Natural killer cell (primary cell): ENCODE measurements at regions of chr22 and their contacts with region 1.

Region 1: GRCh38 chr22:30634471-30635233 is 929 bp upstream of the SLC35E4 start:
- DNase-seq: peak; percentile 85 to 94
- ATAC-seq: peak; percentile 64 to 79 (median 66)
- H3K4me3 ChIP-seq: peak overlapping the region; percentile 49
- H3K4me3 Mint-ChIP-seq: peak overlapping the region; percentile 84
- H3K27ac ChIP-seq: peak overlapping the region; percentile 85
- H3K27ac Mint-ChIP-seq: peak overlapping the region; percentile 92 to 95
- H3K4me1 ChIP-seq: peaks cover 33% of the 10 kb centered on the region
- H3K4me1 Mint-ChIP-seq: peaks cover 7 to 25% of the 10 kb centered on the region in 2 donors
- H3K27me3 ChIP-seq: no peaks in the 10 kb centered on the region
- H3K27me3 Mint-ChIP-seq: no peaks in the 10 kb centered on the region
- CTCF ChIP-seq: peak; percentile 82

Region 2: GRCh38 chr22:30591588-30592359 is 42.9 kb before region 1 on chr22 and contains the start of gene PES1:
- intact Hi-C with region 1: loop called (anchors 1 kb)
- DNase-seq: peak; percentile 92 to 100
- ATAC-seq: peak; percentile 96 to 99 (median 98)
- H3K4me3 ChIP-seq: peak within 1 kb of the TSS; percentile 59
- H3K4me3 Mint-ChIP-seq: no peak within 1 kb of the TSS
- H3K27ac ChIP-seq: peak within 1 kb of the TSS; percentile 79
- H3K27ac Mint-ChIP-seq: no peak within 1 kb of the TSS
- H3K4me1 ChIP-seq: peaks cover 11% of the 10 kb centered on the region
- H3K4me1 Mint-ChIP-seq: no peaks in the 10 kb centered on the region
- H3K27me3 ChIP-seq: no peaks in the 10 kb centered on the region
- H3K27me3 Mint-ChIP-seq: no peaks in the 10 kb centered on the region
- CTCF ChIP-seq: no peak
- total RNA-seq, gene PES1: 30.9 to 39.7 (median 34.9) TPM

Region 3: GRCh38 chr22:30667494-30668385 is 33.1 kb after region 1 on chr22 and contains the start of gene DUSP18:
- intact Hi-C with region 1: loop called (anchors 1 kb)
- DNase-seq: peak; percentile 93 to 96
- ATAC-seq: peak; percentile 94 to 97 (median 95)
- H3K4me3 ChIP-seq: peak within 1 kb of the TSS; percentile 61
- H3K4me3 Mint-ChIP-seq: peak within 1 kb of the TSS; percentile 95
- H3K27ac ChIP-seq: peak within 1 kb of the TSS; percentile 51
- H3K27ac Mint-ChIP-seq: peak within 1 kb of the TSS; percentile 81 to 91
- H3K4me1 ChIP-seq: peaks cover 14% of the 10 kb centered on the region
- H3K4me1 Mint-ChIP-seq: peaks cover 21 to 32% of the 10 kb centered on the region in 2 donors
- H3K27me3 ChIP-seq: no peaks in the 10 kb centered on the region
- H3K27me3 Mint-ChIP-seq: no peaks in the 10 kb centered on the region
- CTCF ChIP-seq: peak; percentile 40
- total RNA-seq, gene DUSP18: 10.2 to 12.8 (median 10.5) TPM

Region 4: DNA sequence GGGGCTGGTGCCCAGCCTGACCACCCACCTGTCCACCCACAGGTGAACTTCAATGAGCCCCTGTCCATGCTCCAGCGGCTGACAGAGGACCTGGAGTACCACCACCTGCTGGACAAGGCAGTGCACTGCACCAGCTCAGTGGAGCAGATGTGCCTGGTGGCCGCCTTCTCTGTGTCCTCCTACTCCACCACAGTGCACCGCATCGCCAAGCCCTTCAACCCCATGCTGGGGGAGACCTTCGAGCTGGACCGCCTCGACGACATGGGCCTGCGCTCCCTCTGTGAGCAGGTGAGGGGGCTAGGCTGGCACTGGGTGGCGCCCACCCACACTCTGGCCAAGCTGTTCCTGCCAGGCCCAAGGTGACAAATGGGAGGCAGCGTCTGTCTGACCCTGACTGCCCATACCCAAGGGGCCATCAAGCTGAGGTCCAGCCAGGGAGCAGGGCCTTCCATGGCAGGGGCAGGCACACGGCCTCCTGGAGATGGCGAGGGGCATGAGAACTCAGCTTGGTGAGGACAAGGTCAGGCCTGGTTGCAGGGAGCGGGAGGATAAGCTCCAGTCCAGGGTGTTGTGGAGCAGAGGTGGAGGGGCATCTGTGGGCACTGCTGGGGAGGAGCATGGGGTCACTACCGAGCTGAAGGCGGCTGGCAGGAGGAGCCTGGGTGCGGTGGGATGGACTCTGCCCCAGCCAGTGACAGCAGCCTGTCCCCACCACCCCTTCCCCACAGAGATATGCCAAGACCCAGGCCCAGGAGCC is 256.2 kb after region 1 on chr22:
- intact Hi-C with region 1: loop called (anchors 1 kb)
- DNase-seq: peak in 1 of 2 donors; percentile 55
- ATAC-seq: peak in 2 of 3 donors; percentile 69 to 74
- H3K4me3 ChIP-seq: no peak overlapping the region
- H3K4me3 Mint-ChIP-seq: no peak overlapping the region
- H3K27ac ChIP-seq: no peak overlapping the region
- H3K27ac Mint-ChIP-seq: no peak overlapping the region
- H3K4me1 ChIP-seq: no peaks in the 10 kb centered on the region
- H3K4me1 Mint-ChIP-seq: peaks cover 10 to 22% of the 10 kb centered on the region in 2 donors
- H3K27me3 ChIP-seq: no peaks in the 10 kb centered on the region
- H3K27me3 Mint-ChIP-seq: no peaks in the 10 kb centered on the region
- CTCF ChIP-seq: peak; percentile 64

Region 5: DNA sequence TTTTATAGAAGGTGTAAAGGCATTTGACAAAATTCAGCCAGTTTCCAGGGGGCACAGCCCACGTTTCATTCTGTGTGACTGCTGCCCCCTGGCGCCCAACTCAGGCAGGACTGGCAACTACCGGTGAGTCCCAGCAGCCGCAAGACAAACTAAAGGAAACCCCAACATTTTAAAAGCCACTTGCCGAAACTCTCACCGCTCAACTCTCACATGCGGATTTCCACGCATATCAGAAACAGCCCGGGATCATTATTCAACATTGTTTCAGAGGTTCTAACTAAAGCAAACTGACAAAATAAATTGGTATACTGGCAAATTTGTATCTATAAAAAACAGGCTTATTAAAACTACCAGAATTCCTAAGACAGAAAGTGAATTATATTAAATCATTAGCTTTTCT is 285.8 kb after region 1 on chr22:
- intact Hi-C with region 1: loop called (anchors 1 kb)
- DNase-seq: peak; percentile 78 to 89
- ATAC-seq: peak; percentile 76 to 83 (median 77)
- H3K4me3 ChIP-seq: no peak overlapping the region
- H3K4me3 Mint-ChIP-seq: peak overlapping the region; percentile 91
- H3K27ac ChIP-seq: no peak overlapping the region
- H3K27ac Mint-ChIP-seq: peak overlapping the region; percentile 18 to 89
- H3K4me1 ChIP-seq: peaks cover 12% of the 10 kb centered on the region
- H3K4me1 Mint-ChIP-seq: peaks cover 22 to 26% of the 10 kb centered on the region in 2 donors
- H3K27me3 ChIP-seq: no peaks in the 10 kb centered on the region
- H3K27me3 Mint-ChIP-seq: no peaks in the 10 kb centered on the region
- CTCF ChIP-seq: peak; percentile 97